ENCODE measurements at regions of chr10 and their contacts with region 1.

Region 1: GRCh38 chr10:102352066-102352715 is 43.3 kb upstream of the NFKB2 start:
- DNase-seq: peak; percentile 51 to 75 (median 59)
- H3K4me3 ChIP-seq: no peak overlapping the region
- H3K4me3 Mint-ChIP-seq: no peak overlapping the region
- H3K27ac ChIP-seq: no peak overlapping the region
- H3K27ac Mint-ChIP-seq: peak overlapping the region in 3 of 8 donors; percentile 23 to 35 (median 24)
- H3K4me1 ChIP-seq: no peaks in the 10 kb centered on the region
- H3K4me1 Mint-ChIP-seq: peaks cover 0 to 5% (median 0%) of the 10 kb centered on the region in 3 donors
- H3K27me3 ChIP-seq: no peaks in the 10 kb centered on the region
- H3K27me3 Mint-ChIP-seq: no peaks in the 10 kb centered on the region

Region 2: GRCh38 chr10:102245101-102245931 is 106.9 kb before region 1 on chr10 and contains the start of gene GBF1:
- CTCF ChIA-PET with region 1: interaction called, 29 read pairs
- POLR2A ChIA-PET with region 1: interaction called, 5 read pairs
- DNase-seq: peak; percentile 80 to 96 (median 93)
- H3K4me3 ChIP-seq: peak within 1 kb of the TSS; percentile 97
- H3K4me3 Mint-ChIP-seq: peak within 1 kb of the TSS; percentile 87 to 99 (median 98)
- H3K27ac ChIP-seq: peak within 1 kb of the TSS; percentile 92
- H3K27ac Mint-ChIP-seq: peak within 1 kb of the TSS; percentile 84 to 100 (median 97)
- H3K4me1 ChIP-seq: peaks cover 55% of the 10 kb centered on the region
- H3K4me1 Mint-ChIP-seq: peaks cover 57 to 69% (median 69%) of the 10 kb centered on the region in 3 donors
- H3K27me3 ChIP-seq: peaks cover 18% of the 10 kb centered on the region
- H3K27me3 Mint-ChIP-seq: peaks cover 12 to 20% of the 10 kb centered on the region in 2 donors
- total RNA-seq, gene GBF1: 38.7 to 39.2 TPM

Region 3: GRCh38 chr10:102368072-102368471 is 15.9 kb after region 1 on chr10:
- CTCF ChIA-PET with region 1: interaction called, 39 read pairs
- POLR2A ChIA-PET with region 1: no interaction called
- DNase-seq: no peak
- H3K4me3 ChIP-seq: no peak overlapping the region
- H3K4me3 Mint-ChIP-seq: no peak overlapping the region
- H3K27ac ChIP-seq: no peak overlapping the region
- H3K27ac Mint-ChIP-seq: peak overlapping the region in 1 of 8 donors; percentile 81
- H3K4me1 ChIP-seq: no peaks in the 10 kb centered on the region
- H3K4me1 Mint-ChIP-seq: no peaks in the 10 kb centered on the region
- H3K27me3 ChIP-seq: no peaks in the 10 kb centered on the region
- H3K27me3 Mint-ChIP-seq: no peaks in the 10 kb centered on the region

Region 4: DNA sequence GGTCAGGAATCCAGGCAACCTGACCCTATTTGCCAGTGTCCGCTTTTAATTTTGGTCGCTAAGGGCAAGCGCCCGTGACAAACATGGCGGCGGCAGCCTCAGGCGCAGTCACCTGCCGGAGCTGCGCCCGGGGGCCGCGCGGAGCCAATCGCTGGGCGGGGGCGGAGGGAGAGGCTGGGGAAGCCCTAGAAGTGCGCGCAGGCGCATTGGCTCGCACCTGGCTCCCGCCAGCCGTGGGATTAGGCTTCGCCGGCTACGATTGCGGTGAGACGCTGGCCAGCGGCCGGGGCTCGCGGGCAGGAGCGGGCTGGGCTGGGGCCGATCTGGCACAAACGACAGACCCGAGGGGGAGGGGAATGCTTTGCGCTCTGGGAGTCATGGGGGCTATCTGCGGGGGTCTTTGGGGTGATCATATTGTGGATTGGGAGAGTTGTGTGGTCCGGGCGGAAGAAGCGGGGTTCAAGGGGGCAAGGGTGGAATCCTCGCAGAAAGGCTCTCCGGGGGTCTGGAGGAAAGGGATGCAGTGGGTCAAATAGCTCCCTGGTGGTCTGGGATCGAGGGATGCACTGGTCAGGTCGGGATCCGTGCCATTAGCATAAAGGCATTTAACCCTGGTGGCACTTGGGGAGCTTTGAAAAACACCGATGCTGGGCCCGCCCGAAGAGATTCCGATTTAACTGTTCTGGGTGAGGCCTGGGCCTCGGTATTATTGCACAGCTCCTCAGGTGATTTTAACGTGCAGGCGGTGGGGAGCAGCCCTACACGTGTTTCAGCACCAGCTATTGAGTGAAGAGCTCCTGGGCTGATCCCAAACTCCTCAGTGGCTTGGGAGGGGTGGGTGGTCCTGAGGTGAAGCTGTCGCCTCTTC is 109.2 kb after region 1 on chr10:
- CTCF ChIA-PET with region 1: no interaction called
- POLR2A ChIA-PET with region 1: no interaction called
- DNase-seq: peak; percentile 87 to 95 (median 91)
- H3K4me3 ChIP-seq: peak overlapping the region; percentile 82
- H3K4me3 Mint-ChIP-seq: peak overlapping the region; percentile 84 to 94 (median 89)
- H3K27ac ChIP-seq: no peak overlapping the region
- H3K27ac Mint-ChIP-seq: peak overlapping the region in 7 of 8 donors; percentile 53 to 93 (median 84)
- H3K4me1 ChIP-seq: peaks cover 15% of the 10 kb centered on the region
- H3K4me1 Mint-ChIP-seq: peaks cover 21 to 29% (median 22%) of the 10 kb centered on the region in 3 donors
- H3K27me3 ChIP-seq: no peaks in the 10 kb centered on the region
- H3K27me3 Mint-ChIP-seq: peaks cover 0 to 4% of the 10 kb centered on the region in 2 donors